ENCODE measurements at regions of chr15 and their contacts with region 1.

Region 1: DNA sequence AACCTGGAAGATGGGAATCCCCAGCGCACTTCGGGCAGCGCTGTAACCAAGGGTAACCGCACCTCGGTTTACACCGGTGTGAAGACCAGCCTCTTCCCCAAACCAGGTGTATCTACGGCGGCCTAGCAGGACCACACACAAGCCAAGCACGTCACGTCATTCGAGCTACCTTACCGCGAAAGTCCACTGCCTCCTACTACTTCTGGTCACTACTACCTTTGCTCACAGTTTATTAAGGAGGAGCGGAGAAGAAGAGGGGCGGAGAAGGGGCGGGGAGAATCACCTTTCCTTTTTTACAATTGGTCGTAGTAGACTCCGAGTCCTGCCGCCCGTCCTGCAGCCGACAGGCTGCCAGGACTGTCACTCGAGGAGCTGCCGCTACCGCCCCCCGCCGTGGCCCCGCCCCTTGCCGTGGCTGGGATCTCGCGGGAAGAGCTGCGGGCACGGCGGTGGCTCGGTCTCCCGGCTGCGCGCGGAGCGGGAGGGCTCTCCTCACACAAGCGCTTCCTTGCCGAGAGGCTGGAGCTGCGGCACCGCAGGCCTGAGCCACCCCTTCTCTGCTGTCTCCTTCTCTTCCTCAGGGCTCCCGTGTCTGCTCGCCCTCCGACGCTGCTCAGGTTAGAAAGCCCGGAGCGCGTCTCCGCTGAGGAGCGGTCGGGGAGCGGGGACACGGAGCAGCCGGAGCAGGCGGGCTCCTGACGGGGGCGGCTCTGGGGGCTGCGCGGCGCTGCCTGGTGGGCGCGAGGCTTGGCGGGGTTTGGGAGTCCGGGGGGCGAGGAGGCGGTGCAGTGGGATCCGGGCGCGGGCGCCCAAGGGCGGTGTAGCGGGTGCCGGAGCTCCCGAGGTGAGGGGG is at the start of gene GLCE:
- DNase-seq: peak; percentile 97
- H3K4me3 ChIP-seq: peak within 1 kb of the TSS; percentile 77 to 91
- H3K27ac ChIP-seq: peak within 1 kb of the TSS; percentile 78
- H3K4me1 ChIP-seq: no peaks in the 10 kb centered on the region
- H3K27me3 ChIP-seq: no peaks in the 10 kb centered on the region
- CTCF ChIP-seq: peak in 1 of 4 experiments; percentile 24
- POLR2A ChIP-seq: peak; percentile 93
- total RNA-seq, gene GLCE: 17.4 TPM

Region 2: GRCh38 chr15:68948951-68949526 is 211.3 kb before region 1 on chr15:
- intact Hi-C with region 1: no loop called
- DNase-seq: no peak
- H3K4me3 ChIP-seq: no peak overlapping the region
- H3K27ac ChIP-seq: no peak overlapping the region
- H3K4me1 ChIP-seq: no peaks in the 10 kb centered on the region
- H3K27me3 ChIP-seq: no peaks in the 10 kb centered on the region
- CTCF ChIP-seq: no peak
- POLR2A ChIP-seq: no peak

Region 3: DNA sequence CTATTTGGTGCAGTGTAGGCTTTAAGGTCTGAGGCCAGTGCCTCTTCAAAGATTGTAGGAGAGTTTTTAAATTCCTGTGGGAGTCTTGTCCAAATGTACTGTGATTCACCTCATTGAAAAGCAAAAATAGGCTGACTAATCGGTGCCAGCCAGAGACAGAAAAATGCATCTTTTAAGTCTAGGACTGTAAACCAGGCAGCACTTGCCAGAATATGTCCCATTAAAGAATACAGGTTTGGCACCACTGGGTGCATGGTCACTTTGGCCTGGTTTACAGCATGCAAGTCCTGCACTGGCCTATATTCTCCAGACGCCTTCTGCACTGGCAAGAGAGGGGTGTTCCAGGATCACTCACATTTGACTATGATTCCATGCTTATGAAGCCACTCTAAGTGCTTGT is 166.2 kb before region 1 on chr15:
- intact Hi-C with region 1: no loop called
- DNase-seq: no peak
- H3K4me3 ChIP-seq: no peak overlapping the region
- H3K27ac ChIP-seq: no peak overlapping the region
- H3K4me1 ChIP-seq: no peaks in the 10 kb centered on the region
- H3K27me3 ChIP-seq: no peaks in the 10 kb centered on the region
- CTCF ChIP-seq: no peak
- POLR2A ChIP-seq: no peak

Region 4: GRCh38 chr15:69009341-69009740 is 151.0 kb before region 1 on chr15:
- intact Hi-C with region 1: no loop called
- DNase-seq: no peak
- H3K4me3 ChIP-seq: no peak overlapping the region
- H3K27ac ChIP-seq: no peak overlapping the region
- H3K4me1 ChIP-seq: no peaks in the 10 kb centered on the region
- H3K27me3 ChIP-seq: no peaks in the 10 kb centered on the region
- CTCF ChIP-seq: no peak
- POLR2A ChIP-seq: no peak

Region 5: GRCh38 chr15:69394556-69395282 is 234.4 kb after region 1 on chr15:
- intact Hi-C with region 1: loop called (anchors 5 kb)
- DNase-seq: peak; percentile 70
- H3K4me3 ChIP-seq: no peak overlapping the region
- H3K27ac ChIP-seq: no peak overlapping the region
- H3K4me1 ChIP-seq: peaks cover 4% of the 10 kb centered on the region
- H3K27me3 ChIP-seq: no peaks in the 10 kb centered on the region
- CTCF ChIP-seq: peak; percentile 78 to 96 (median 90)
- POLR2A ChIP-seq: no peak

Region 6: GRCh38 chr15:69462493-69463181 is 302.3 kb after region 1 on chr15:
- intact Hi-C with region 1: loop called (anchors 5 kb)
- DNase-seq: peak; percentile 94
- H3K4me3 ChIP-seq: peak overlapping the region; percentile 30 to 36
- H3K27ac ChIP-seq: peak overlapping the region; percentile 79 to 88
- H3K4me1 ChIP-seq: no peaks in the 10 kb centered on the region
- H3K27me3 ChIP-seq: no peaks in the 10 kb centered on the region
- CTCF ChIP-seq: peak; percentile 82 to 97 (median 90)
- POLR2A ChIP-seq: peak; percentile 82